ENCODE measurements at regions of chr1 and their contacts with region 1.

Region 1: DNA sequence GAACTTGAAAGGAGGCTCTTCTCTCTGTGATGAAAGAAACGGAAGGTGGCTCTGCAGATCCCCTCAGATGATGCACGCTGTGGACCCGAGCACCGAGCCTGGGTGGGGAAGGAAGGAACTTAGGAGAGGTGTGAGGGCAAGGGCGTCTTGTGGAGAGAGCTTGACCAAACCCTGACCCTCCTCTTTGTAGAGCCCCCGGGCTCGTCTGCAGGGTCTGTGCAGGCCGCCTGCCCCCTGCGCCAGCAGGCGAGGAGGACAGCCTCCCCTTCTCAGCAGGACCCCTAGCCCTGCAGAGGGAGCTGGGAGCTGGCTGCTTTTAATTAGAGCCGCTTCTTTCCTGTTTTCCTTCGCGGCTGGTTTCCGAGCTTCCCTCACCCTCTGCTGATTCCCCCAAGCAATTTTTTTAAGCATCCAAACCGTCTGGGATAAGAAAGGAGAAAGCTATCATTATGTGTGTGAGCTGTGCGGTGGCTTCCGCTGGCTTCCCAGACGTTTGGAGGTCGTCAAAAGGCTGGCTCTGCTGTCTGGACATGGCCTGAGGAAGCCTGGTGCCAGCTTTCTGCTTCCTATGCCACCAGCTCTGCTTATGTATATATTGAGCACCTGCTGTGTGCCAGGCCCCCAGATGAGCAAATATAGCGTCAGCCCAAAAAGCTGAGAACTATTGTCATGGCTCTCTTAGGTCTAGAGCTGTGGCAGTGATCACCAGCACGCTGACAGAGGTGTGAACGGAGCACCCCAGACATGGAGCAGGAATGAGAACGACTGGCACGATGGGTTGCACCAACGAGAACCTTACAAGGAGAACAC is 160.2 kb upstream of the IRF2BP2 start:
- DNase-seq: peak in 1 of 7 donors; percentile 15
- H3K4me3 ChIP-seq: no peak overlapping the region
- H3K27ac ChIP-seq: no peak overlapping the region
- H3K4me1 ChIP-seq: peaks cover 0 to 11% of the 10 kb centered on the region in 2 donors
- H3K27me3 ChIP-seq: no peaks in the 10 kb centered on the region
- CTCF ChIP-seq: no peak
- POLR2A ChIP-seq: no peak

Region 2: DNA sequence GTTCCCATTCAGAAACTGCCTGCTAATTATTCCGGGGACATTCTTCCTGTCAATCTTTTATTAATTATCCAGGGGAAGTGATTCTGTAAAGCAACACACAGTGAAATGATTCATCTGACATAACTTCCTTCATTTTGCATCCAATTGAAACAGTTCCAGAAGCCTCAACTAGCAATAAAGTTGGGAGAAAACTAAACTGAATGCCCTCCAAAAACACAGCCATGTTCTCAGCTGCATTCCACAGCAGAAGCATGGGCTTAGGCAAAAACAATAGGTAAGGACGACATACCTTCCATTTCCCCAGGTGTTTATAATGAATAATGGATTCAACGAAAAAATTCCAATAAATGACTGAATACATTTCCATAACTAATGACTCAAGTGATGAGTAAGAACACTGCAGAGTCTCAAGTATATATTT is 254.4 kb before region 1 on chr1:
- intact Hi-C with region 1: no loop called
- DNase-seq: no peak
- H3K4me3 ChIP-seq: no peak overlapping the region
- H3K27ac ChIP-seq: peak overlapping the region in 1 of 5 donors; percentile 6
- H3K4me1 ChIP-seq: peaks cover 0 to 9% of the 10 kb centered on the region in 2 donors
- H3K27me3 ChIP-seq: no peaks in the 10 kb centered on the region
- CTCF ChIP-seq: no peak
- POLR2A ChIP-seq: no peak

Region 3: GRCh38 chr1:234544087-234544579 is 226.1 kb before region 1 on chr1:
- intact Hi-C with region 1: no loop called
- DNase-seq: peak; percentile 79 to 94 (median 87)
- H3K4me3 ChIP-seq: no peak overlapping the region
- H3K27ac ChIP-seq: peak overlapping the region; percentile 18 to 93 (median 83)
- H3K4me1 ChIP-seq: peaks cover 26 to 37% of the 10 kb centered on the region in 2 donors
- H3K27me3 ChIP-seq: no peaks in the 10 kb centered on the region
- CTCF ChIP-seq: no peak
- POLR2A ChIP-seq: peak in 1 of 2 donors; percentile 31

Region 4: GRCh38 chr1:234645474-234645953 is 124.7 kb before region 1 on chr1:
- intact Hi-C with region 1: no loop called
- DNase-seq: no peak
- H3K4me3 ChIP-seq: no peak overlapping the region
- H3K27ac ChIP-seq: peak overlapping the region in 1 of 5 donors; percentile 22
- H3K4me1 ChIP-seq: no peaks in the 10 kb centered on the region
- H3K27me3 ChIP-seq: no peaks in the 10 kb centered on the region
- CTCF ChIP-seq: no peak
- POLR2A ChIP-seq: no peak

Region 5: GRCh38 chr1:234670967-234671626 is 99.1 kb before region 1 on chr1:
- intact Hi-C with region 1: no loop called
- DNase-seq: no peak
- H3K4me3 ChIP-seq: no peak overlapping the region
- H3K27ac ChIP-seq: no peak overlapping the region
- H3K4me1 ChIP-seq: peaks cover 0 to 10% of the 10 kb centered on the region in 2 donors
- H3K27me3 ChIP-seq: no peaks in the 10 kb centered on the region
- CTCF ChIP-seq: no peak
- POLR2A ChIP-seq: no peak

Region 6: DNA sequence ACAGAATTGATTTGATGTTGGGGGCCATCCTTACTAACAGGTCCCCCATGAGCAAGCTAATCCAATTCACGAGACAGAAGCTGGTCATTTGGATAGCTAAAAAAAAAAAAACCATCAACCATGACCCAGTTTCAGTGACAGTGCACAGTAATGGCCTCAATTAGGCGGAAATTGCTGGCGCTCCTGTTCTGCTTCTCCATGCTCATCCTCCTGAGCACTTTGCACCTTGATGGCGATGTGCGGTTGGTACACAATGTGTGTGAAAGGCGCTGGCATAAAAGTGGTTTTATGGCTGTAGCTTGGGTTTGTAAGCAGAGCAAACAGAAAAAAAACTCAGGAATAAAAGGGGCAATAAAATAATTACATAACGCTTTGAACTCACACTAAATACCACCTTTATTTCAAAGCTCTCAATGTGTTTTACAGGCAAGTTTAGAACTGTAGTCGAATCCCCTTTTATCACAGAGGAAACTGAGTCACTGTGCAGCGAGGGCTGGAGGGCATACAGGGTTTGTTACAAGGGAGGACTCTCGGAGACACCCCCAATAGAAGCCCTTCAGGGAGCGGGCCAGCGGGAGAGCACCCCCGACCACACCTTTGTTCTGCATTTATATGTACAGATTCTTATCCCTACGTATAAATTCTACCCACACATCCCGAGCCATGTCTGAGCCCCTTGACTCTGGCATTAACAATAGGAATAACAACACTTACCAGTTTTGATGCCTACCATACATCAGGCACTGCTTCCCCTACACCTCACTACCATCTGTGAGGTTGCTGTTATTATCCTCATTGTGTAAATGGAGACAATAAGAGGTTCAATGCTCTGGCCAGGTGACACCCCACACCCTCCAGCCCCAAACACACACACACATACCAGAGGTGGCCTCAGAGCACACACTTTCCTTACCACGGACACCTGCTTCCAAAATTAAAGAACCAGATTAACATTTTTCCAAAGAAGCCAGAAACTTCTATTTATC is 53.3 kb after region 1 on chr1:
- intact Hi-C with region 1: loop called in 1 of 2 experiments (anchors 10 kb)
- DNase-seq: no peak
- H3K4me3 ChIP-seq: no peak overlapping the region
- H3K27ac ChIP-seq: no peak overlapping the region
- H3K4me1 ChIP-seq: peaks cover 0 to 5% of the 10 kb centered on the region in 2 donors
- H3K27me3 ChIP-seq: no peaks in the 10 kb centered on the region
- CTCF ChIP-seq: no peak
- POLR2A ChIP-seq: no peak

Measured in adrenal gland (tissue), 19 donors.